A549 (cell line): ENCODE measurements at regions of chr7 and their contacts with region 1.

Region 1: DNA sequence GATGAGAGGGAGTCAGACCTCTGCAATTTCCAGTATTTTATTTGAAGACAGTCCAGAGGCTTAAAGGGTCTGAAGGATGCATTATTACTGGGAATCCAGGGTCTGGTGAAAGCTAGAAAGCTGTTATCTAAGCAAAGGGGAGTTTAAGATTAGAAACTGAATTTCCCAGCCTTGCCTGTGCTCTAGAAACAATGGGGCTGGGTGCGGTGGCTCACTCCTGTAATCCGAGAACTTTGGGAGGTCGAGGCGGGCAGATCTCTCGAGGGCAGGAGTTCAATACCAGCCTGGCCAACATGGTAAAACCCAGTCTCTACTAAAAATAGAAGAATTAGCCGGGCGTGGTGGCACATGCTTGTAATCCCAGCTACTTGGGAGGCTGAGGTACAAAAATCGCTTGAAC is 71.5 kb upstream of the ANLN start:
- DNase-seq: no peak
- ATAC-seq: no peak
- H3K4me3 ChIP-seq: no peak overlapping the region
- H3K27ac ChIP-seq: 0 out of 6 replicates have a peak overlapping the region, but pooled peaks of 1 of the 2 experiments have one; percentile 4
- H3K4me1 ChIP-seq: no peaks in the 10 kb centered on the region
- CTCF ChIP-seq: no peak
- EP300 ChIP-seq: no peak
- POLR2A ChIP-seq: no peak
- RAD21 ChIP-seq: no peak

Region 2: GRCh38 chr7:35975851-35976454 is 342.2 kb before region 1 on chr7:
- CTCF ChIA-PET with region 1: interaction called, 26 read pairs
- POLR2A ChIA-PET with region 1: no interaction called
- DNase-seq: peak in 1 of 2 experiments; percentile 84
- ATAC-seq: peak; percentile 80 to 93
- H3K4me3 ChIP-seq: no peak overlapping the region
- H3K27ac ChIP-seq: no peak overlapping the region
- H3K4me1 ChIP-seq: no peaks in the 10 kb centered on the region
- CTCF ChIP-seq: peak; percentile 88
- EP300 ChIP-seq: no peak
- POLR2A ChIP-seq: no peak
- RAD21 ChIP-seq: peak; percentile 86 to 92

Region 3: GRCh38 chr7:36182854-36183604 is 135.1 kb before region 1 on chr7:
- CTCF ChIA-PET with region 1: no interaction called
- POLR2A ChIA-PET with region 1: no interaction called
- DNase-seq: no peak
- ATAC-seq: peak in 1 of 2 experiments; percentile 30; a peak in 1 of 6 replicates
- H3K4me3 ChIP-seq: no peak overlapping the region
- H3K27ac ChIP-seq: no peak overlapping the region
- H3K4me1 ChIP-seq: peaks cover 11% of the 10 kb centered on the region; the same call in 2 of the 3 replicates
- CTCF ChIP-seq: no peak
- EP300 ChIP-seq: no peak
- POLR2A ChIP-seq: no peak
- RAD21 ChIP-seq: no peak

Region 4: DNA sequence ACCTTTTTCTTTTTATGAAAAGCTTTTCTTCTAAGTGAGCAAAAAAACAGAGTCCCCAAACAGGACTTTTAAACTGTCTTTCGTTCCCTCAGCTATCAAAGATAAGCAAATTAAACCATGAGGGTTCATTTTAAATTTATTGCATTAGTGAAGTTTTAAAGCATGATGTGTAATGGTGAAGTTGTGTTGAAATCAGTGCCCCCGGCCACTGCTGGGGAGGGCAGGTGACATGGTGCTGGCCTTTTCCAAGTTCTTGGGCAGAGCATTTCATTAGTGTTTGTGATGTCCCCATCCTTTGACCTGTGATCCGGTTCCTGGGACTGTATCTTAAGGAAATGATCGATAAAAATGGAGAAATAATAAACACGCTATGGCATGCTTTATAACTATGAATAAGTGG is 69.0 kb before region 1 on chr7:
- CTCF ChIA-PET with region 1: no interaction called
- POLR2A ChIA-PET with region 1: no interaction called
- DNase-seq: no peak
- ATAC-seq: no peak
- H3K4me3 ChIP-seq: no peak overlapping the region
- H3K27ac ChIP-seq: no peak overlapping the region
- H3K4me1 ChIP-seq: no peaks in the 10 kb centered on the region
- CTCF ChIP-seq: no peak
- EP300 ChIP-seq: no peak
- POLR2A ChIP-seq: no peak
- RAD21 ChIP-seq: no peak

Region 5: GRCh38 chr7:36303202-36304098 is 14.7 kb before region 1 on chr7:
- CTCF ChIA-PET with region 1: interaction called, 131 read pairs
- POLR2A ChIA-PET with region 1: no interaction called
- DNase-seq: peak; percentile 66 to 87
- ATAC-seq: peak; percentile 70 to 81
- H3K4me3 ChIP-seq: no peak overlapping the region
- H3K27ac ChIP-seq: peak overlapping the region; percentile 54 to 67
- H3K4me1 ChIP-seq: peaks cover 35% of the 10 kb centered on the region
- CTCF ChIP-seq: no peak
- EP300 ChIP-seq: peak; percentile 21 to 74; a peak in 3 of 5 replicates
- POLR2A ChIP-seq: no peak
- RAD21 ChIP-seq: no peak

Region 6: DNA sequence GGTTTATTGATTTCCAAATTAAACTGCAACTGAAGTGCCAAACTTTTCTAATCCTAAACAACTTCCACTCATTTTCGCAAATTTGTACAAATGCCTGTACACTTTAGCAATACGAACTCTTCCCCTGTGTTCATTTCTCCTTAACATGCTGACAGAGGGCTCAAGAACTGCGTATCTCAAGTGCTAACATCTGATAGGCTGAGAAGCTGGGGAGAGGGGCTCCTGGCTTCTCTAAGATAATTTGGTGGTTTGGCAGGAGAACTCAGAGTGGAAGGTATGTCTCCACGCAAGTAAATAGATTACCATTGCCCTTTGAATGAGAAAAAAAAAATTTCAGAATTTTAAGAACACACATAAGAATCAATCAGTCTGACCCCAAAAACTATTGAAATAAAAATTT is 18.3 kb after region 1 on chr7:
- CTCF ChIA-PET with region 1: interaction called, 15 read pairs
- POLR2A ChIA-PET with region 1: no interaction called
- DNase-seq: no peak
- ATAC-seq: no peak
- H3K4me3 ChIP-seq: no peak overlapping the region
- H3K27ac ChIP-seq: no peak overlapping the region
- H3K4me1 ChIP-seq: no peaks in the 10 kb centered on the region
- CTCF ChIP-seq: no peak
- EP300 ChIP-seq: no peak
- POLR2A ChIP-seq: no peak
- RAD21 ChIP-seq: no peak

Region 7: GRCh38 chr7:36379831-36380504 is 61.9 kb after region 1 on chr7:
- CTCF ChIA-PET with region 1: no interaction called
- POLR2A ChIA-PET with region 1: no interaction called
- DNase-seq: no peak
- ATAC-seq: no peak
- H3K4me3 ChIP-seq: no peak overlapping the region
- H3K27ac ChIP-seq: no peak overlapping the region
- H3K4me1 ChIP-seq: no peaks in the 10 kb centered on the region
- CTCF ChIP-seq: no peak
- EP300 ChIP-seq: no peak
- POLR2A ChIP-seq: no peak
- RAD21 ChIP-seq: no peak